Activated CD8-positive, alpha-beta T cell treated with anti-CD3 and anti-CD28 coated beads for 36 hours (primary cell): ENCODE measurements at regions of chr18 and their contacts with region 1.

Region 1: GRCh38 chr18:21851327-21851972 is 110.9 kb downstream of the MIB1 start:
- DNase-seq: no peak
- ATAC-seq: no peak
- H3K4me3 Mint-ChIP-seq: no peak overlapping the region
- H3K27ac Mint-ChIP-seq: no peak overlapping the region
- H3K4me1 Mint-ChIP-seq: peaks cover 7% of the 10 kb centered on the region
- H3K27me3 Mint-ChIP-seq: no peaks in the 10 kb centered on the region
- CTCF ChIP-seq: peak; percentile 32

Region 2: GRCh38 chr18:21682371-21683051 is 168.9 kb before region 1 on chr18:
- CTCF ChIA-PET with region 1: no interaction called
- POLR2A ChIA-PET with region 1: no interaction called
- intact Hi-C with region 1: loop called (anchors 10 kb)
- DNase-seq: peak; percentile 11
- ATAC-seq: peak; percentile 84
- H3K4me3 Mint-ChIP-seq: no peak overlapping the region
- H3K27ac Mint-ChIP-seq: no peak overlapping the region
- H3K4me1 Mint-ChIP-seq: peaks cover 10% of the 10 kb centered on the region
- H3K27me3 Mint-ChIP-seq: no peaks in the 10 kb centered on the region
- CTCF ChIP-seq: no peak